Left lung (tissue), 14 donors: ENCODE measurements at regions of chr12 and their contacts with region 1.

Region 1: GRCh38 chr12:3202734-3203446 is 125.7 kb downstream of the TSPAN9 start:
- DNase-seq: peak in 2 of 4 donors; percentile 29 to 64
- ATAC-seq: peak; percentile 59
- H3K4me3 ChIP-seq: no peak overlapping the region
- H3K27ac ChIP-seq: no peak overlapping the region
- H3K4me1 ChIP-seq: peaks cover 22 to 51% of the 10 kb centered on the region in 2 donors
- H3K27me3 ChIP-seq: peaks cover 6 to 40% of the 10 kb centered on the region in 2 donors
- CTCF ChIP-seq: peak; percentile 77 to 88

Region 2: GRCh38 chr12:3135522-3136461 is 67.1 kb before region 1 on chr12:
- intact Hi-C with region 1: loop called in 1 of 2 experiments (anchors 10 kb)
- DNase-seq: peak in 2 of 4 donors; percentile 66 to 85
- ATAC-seq: peak; percentile 81
- H3K4me3 ChIP-seq: no peak overlapping the region
- H3K27ac ChIP-seq: no peak overlapping the region
- H3K4me1 ChIP-seq: peaks cover 11 to 36% of the 10 kb centered on the region in 2 donors
- H3K27me3 ChIP-seq: peaks cover 0 to 30% of the 10 kb centered on the region in 2 donors
- CTCF ChIP-seq: peak; percentile 68 to 88